Dendritic cell treated with granulocyte-macrophage colony-stimulating factor and Interleukin-4, amounts not matched to agents 40 ng/mL and 50 ng/mL, for 4 days (primary cell): ENCODE measurements at regions of chr21 and their contacts with region 1.

Region 1: GRCh38 chr21:28745131-28746016 is 247.3 kb downstream of the LTN1 start:
- H3K4me3 Mint-ChIP-seq: no peak overlapping the region
- H3K27ac Mint-ChIP-seq: no peak overlapping the region
- H3K4me1 Mint-ChIP-seq: no peaks in the 10 kb centered on the region
- H3K27me3 Mint-ChIP-seq: no peaks in the 10 kb centered on the region

Region 2: DNA sequence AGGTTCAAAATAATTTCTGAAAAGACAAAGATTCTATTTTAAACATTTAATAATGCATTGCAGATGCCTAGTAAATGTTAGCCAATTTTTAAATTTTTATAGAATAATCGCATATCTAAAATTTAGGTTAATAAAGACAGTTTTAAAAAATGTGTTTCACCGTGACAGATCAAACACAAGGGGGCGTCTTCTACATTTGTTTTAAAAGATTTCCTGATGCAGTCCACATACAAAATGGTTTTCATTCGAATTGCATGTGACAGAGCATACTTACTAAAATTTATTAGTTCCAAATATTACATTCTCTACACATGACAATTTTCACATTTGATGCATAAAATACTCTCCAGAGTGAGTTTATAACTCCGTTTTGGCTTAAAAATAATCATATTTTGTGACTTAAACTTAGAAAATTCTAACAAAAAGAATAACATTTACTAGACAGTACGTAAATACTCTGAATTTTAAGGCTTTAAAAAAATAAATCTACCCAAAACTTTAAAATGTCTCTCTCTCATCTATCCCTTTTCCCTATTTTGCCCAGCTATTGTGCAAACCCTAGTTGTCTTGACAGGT is 1975.7 kb before region 1 on chr21:
- intact Hi-C with region 1: loop called (anchors 10 kb)
- H3K4me3 Mint-ChIP-seq: no peak overlapping the region
- H3K27ac Mint-ChIP-seq: no peak overlapping the region
- H3K4me1 Mint-ChIP-seq: no peaks in the 10 kb centered on the region
- H3K27me3 Mint-ChIP-seq: no peaks in the 10 kb centered on the region

Region 3: DNA sequence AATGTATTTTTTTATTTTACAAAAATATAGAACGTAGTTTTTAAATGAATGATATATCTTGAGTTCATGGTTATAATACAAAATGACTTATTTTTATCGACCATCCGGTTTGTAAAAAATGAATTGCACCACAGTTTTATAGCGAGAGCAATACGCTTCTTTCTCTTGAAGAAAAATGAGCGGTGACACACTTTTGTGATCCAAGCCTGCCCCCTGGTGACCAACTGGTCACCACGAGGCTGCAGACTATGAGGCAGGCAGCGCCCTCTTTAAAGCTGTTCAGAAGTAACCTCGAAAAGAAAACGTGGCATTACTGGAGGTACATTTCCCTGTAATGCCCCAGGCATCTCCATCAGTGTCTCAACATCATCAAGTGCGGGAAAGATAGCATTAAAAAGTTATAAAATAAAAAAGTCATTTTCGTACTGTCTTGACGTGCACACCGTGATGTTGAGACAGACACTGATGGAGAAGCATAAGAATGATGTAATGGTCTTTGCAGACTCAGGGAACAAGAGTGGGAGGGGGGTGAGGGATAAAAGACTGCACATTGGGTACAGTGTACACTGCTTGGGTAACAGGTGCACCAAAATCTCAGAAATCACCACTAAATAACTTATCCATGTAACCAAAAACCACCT is 1044.3 kb before region 1 on chr21:
- intact Hi-C with region 1: loop called (anchors 2 kb)
- H3K4me3 Mint-ChIP-seq: no peak overlapping the region
- H3K27ac Mint-ChIP-seq: no peak overlapping the region
- H3K4me1 Mint-ChIP-seq: no peaks in the 10 kb centered on the region
- H3K27me3 Mint-ChIP-seq: no peaks in the 10 kb centered on the region

Region 4: DNA sequence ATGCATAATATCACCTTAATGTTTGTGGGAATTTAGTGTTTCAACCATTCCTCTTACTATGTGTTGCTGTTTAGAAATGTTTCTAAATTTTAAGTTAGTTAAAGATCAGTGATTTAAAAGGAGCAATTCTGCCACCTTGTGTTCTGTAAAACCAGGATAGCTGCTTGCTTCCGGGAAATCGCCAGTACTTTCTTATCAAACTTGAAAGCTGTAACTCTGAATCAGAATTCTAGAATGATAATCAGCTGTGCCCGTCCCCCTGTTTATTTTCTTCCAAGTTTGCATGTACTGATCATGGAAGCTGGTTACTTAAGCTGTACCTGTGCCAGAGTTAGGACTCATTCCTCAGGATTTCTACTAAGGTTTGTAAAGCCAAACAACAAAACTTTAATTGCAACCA is 409.1 kb before region 1 on chr21:
- intact Hi-C with region 1: loop called (anchors 10 kb)
- H3K4me3 Mint-ChIP-seq: no peak overlapping the region
- H3K27ac Mint-ChIP-seq: no peak overlapping the region
- H3K4me1 Mint-ChIP-seq: no peaks in the 10 kb centered on the region
- H3K27me3 Mint-ChIP-seq: no peaks in the 10 kb centered on the region

Region 5: DNA sequence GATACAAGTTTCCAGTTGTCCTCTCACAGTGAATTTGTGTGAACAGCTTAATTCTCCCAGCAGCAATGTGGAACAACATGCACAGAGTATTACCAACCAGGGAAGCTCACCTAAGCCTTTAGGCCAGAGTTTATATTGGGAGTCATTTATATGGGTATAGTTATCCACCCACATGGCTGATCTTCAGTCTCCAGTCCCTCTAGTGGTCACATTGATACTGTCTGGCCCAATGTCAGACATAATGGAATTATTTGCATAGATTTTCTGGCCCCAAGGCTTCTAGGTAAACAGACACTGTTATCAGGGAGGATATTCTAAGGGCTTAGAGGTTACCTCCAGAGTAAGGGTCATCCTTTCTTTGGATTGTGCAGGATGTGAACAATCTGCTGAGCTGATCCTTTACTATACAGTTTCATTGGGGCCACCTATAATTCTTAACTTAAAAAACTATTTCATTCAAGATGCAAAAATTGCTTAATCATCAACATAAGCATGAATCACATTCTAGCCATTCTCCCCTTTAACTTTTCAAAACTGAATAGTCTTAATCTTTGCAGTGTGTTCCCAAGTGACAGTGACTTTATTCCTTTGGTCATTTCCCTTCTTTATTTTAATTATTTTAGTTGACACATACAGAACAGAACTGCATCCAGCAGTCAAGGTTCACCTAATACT is 36.4 kb after region 1 on chr21:
- intact Hi-C with region 1: no loop called
- H3K4me3 Mint-ChIP-seq: no peak overlapping the region
- H3K27ac Mint-ChIP-seq: no peak overlapping the region
- H3K4me1 Mint-ChIP-seq: no peaks in the 10 kb centered on the region
- H3K27me3 Mint-ChIP-seq: no peaks in the 10 kb centered on the region

Region 6: GRCh38 chr21:28938726-28939125 is 193.4 kb after region 1 on chr21:
- intact Hi-C with region 1: loop called (anchors 5 kb)
- H3K4me3 Mint-ChIP-seq: no peak overlapping the region
- H3K27ac Mint-ChIP-seq: no peak overlapping the region
- H3K4me1 Mint-ChIP-seq: peaks cover 13% of the 10 kb centered on the region
- H3K27me3 Mint-ChIP-seq: no peaks in the 10 kb centered on the region

Region 7: GRCh38 chr21:29155118-29155932 is 410.0 kb after region 1 on chr21:
- intact Hi-C with region 1: no loop called
- H3K4me3 Mint-ChIP-seq: peak overlapping the region; percentile 37
- H3K27ac Mint-ChIP-seq: peak overlapping the region; percentile 37
- H3K4me1 Mint-ChIP-seq: peaks cover 19% of the 10 kb centered on the region
- H3K27me3 Mint-ChIP-seq: no peaks in the 10 kb centered on the region